AG04449 (cell line): ENCODE measurements at regions of chr4 and their contacts with region 1.

Region 1: GRCh38 chr4:165464813-165465381 is 86.1 kb downstream of the CPE start:
- DNase-seq: no peak
- H3K4me3 ChIP-seq: no peak overlapping the region
- CTCF ChIP-seq: peak; percentile 51

Region 2: DNA sequence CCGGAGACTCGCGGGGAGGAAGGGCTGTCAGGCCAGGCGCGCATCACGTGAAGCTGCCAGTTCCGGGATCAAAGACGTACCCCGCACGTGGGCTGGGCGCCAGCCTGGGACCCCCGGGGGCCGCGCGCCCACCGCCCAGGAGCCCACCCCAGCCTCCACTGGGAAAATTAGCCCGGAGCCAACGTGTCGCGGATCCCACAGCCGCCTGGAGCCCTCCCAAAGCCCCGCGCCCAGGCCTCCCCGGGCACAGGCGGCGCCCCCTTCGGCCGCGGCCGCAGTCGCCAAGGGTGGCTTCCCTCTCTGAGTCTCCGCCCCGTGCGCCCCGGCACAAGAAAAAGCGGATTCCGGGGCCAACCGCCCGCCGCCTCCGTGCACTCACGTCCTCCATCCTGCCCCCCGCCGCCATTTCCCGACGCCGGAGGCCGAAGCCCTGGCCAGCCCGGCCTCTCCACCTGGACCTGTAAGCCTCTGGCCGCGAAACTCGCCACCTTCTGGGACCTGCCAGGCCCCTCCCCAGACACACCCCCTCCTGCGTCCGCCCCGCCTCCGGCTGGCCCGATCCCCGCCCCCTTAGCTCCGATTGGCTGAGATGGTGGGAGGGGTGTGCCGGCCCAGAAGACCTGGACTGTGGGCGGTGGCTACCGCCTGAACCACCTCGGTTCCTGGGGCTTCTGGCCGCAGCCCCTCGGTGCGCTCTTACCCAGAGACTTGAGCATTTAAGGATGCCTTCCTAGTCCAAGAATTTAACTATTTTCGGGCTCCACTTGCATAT is 352.3 kb before region 1 on chr4 and contains the start of gene TMEM192:
- CTCF ChIA-PET with region 1: interaction called, 16 read pairs
- POLR2A ChIA-PET with region 1: interaction called, 3 read pairs
- DNase-seq: no peak
- H3K4me3 ChIP-seq: peak within 1 kb of the TSS; percentile 89
- CTCF ChIP-seq: peak; percentile 55

Region 3: GRCh38 chr4:165355900-165356300 is 109.0 kb before region 1 on chr4:
- CTCF ChIA-PET with region 1: interaction called, 13 read pairs
- POLR2A ChIA-PET with region 1: no interaction called
- DNase-seq: no peak
- H3K4me3 ChIP-seq: no peak overlapping the region
- CTCF ChIP-seq: peak; percentile 32

Region 4: GRCh38 chr4:165454417-165454816 is 10.5 kb before region 1 on chr4:
- CTCF ChIA-PET with region 1: interaction called, 12 read pairs
- POLR2A ChIA-PET with region 1: no interaction called
- DNase-seq: no peak
- H3K4me3 ChIP-seq: no peak overlapping the region
- CTCF ChIP-seq: no peak